ENCODE measurements at regions of chr4 and their contacts with region 1.

Region 1: DNA sequence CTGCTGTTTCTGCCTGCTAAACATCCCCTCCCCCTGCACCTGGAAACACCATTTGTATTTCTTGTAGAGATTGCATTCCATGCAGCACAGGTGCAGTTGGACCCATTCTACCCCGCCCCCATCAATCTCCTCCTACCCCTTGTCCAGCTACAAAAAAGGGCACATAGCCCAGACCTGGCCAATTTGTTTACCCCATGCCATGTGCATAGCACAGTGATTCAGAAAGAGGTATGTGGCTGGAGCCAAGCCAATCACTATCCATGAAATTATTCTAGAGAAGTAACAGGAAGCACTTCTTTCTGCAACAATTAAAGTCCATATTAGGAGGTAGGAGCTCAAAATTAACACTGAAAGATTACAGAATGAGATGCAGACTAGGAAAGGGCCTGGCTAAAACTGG is 20.2 kb upstream of the TMEM184C start:
- DNase-seq: no peak
- H3K4me3 ChIP-seq: no peak overlapping the region
- CTCF ChIP-seq: no peak

Region 2: DNA sequence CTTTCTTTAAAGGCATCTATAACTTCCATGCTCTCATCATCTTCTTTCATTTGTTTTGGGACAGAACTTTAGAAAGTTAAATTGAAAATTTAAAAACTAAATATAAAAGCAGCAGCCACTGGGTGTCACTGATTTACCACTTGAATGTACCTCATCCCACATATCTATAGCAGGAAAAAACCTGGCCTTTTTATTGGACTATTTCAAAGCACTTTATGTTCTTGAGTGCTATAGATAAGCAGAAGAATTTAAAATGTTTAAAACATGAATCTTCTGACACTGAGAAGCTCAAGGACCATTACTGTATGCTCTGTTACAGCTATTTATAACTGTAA is 486.0 kb before region 1 on chr4:
- CTCF ChIA-PET with region 1: interaction called, 64 read pairs
- POLR2A ChIA-PET with region 1: no interaction called
- DNase-seq: no peak
- H3K4me3 ChIP-seq: no peak overlapping the region
- CTCF ChIP-seq: no peak

Region 3: GRCh38 chr4:147371661-147372060 is 225.3 kb before region 1 on chr4:
- CTCF ChIA-PET with region 1: no interaction called
- POLR2A ChIA-PET with region 1: no interaction called
- DNase-seq: no peak
- H3K4me3 ChIP-seq: no peak overlapping the region
- CTCF ChIP-seq: no peak